RWPE1 (cell line): ENCODE measurements at regions of chr11 and their contacts with region 1.

Region 1: GRCh38 chr11:62905927-62906531 is 15.1 kb downstream of the CHRM1 start:
- DNase-seq: peak; percentile 79
- H3K27ac ChIP-seq: no peak overlapping the region
- CTCF ChIP-seq: peak; percentile 98

Region 2: GRCh38 chr11:62922658-62923431 is 16.8 kb after region 1 on chr11:
- CTCF ChIA-PET with region 1: interaction called, 16 read pairs
- POLR2A ChIA-PET with region 1: no interaction called
- DNase-seq: no peak
- H3K27ac ChIP-seq: no peak overlapping the region; the same call in 1 of the 2 replicates
- CTCF ChIP-seq: no peak

Region 3: DNA sequence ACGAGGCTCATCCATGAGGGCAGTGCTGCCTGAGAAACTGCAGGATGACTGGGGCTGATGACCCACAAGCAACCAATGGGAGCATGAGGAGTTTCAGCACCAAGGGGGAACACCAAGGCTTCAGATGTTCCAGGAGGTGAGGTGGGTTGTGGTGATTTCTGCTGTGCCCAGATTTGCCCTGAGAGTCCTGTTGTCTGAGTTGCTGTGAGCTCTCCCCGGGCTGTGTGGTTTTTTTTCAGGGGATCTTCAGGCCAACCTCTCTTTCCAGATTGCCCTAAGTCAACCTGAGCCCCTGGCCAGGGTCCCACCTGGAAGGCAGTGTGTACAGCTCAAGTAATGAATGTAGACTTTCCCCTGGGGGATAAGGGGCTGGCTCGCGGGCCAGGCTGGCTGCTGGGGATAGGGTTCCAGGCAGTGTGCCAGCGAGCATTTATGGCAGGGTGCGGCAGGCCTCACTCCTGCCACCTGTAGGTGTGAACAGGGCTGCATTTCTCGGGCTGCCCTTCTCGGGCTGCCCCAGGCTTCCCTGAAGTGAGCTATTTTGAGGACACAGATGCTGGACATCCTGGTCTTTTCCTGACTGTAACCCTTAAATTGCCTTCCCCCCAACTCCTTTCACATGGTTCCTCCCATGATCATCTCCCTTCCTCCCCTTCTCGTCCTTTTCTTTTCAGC is 69.0 kb after region 1 on chr11:
- CTCF ChIA-PET with region 1: interaction called, 18 read pairs
- POLR2A ChIA-PET with region 1: no interaction called
- DNase-seq: no peak
- H3K27ac ChIP-seq: no peak overlapping the region
- CTCF ChIP-seq: peak; percentile 28; the same call in 1 of the 2 replicates

Region 4: DNA sequence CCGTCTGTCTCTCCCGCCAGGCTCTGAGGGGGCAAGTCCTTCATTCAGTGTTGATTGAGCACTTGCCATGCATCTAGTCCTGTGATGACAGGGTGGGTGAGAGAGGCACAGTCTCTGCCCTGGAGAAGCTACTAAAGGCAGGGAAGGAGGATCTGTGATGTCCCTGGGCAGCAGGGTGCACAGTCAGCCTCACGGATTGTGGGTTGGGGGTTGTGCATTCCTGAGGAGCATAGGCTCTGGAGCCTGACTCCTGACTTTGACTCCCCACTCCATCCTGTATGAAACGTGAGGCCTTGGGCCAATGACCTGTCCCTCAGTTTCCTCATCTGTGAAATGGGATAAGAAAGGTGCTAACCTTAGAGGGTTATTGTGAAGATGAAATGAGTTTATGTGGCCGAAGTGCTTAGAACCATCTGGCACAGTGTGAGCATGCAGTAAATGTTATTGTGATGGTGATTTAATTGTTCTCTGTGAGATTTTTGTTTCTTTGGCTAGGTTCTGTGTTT is 105.0 kb after region 1 on chr11:
- CTCF ChIA-PET with region 1: interaction called, 14 read pairs
- POLR2A ChIA-PET with region 1: no interaction called
- DNase-seq: no peak
- H3K27ac ChIP-seq: no peak overlapping the region
- CTCF ChIP-seq: no peak

Region 5: DNA sequence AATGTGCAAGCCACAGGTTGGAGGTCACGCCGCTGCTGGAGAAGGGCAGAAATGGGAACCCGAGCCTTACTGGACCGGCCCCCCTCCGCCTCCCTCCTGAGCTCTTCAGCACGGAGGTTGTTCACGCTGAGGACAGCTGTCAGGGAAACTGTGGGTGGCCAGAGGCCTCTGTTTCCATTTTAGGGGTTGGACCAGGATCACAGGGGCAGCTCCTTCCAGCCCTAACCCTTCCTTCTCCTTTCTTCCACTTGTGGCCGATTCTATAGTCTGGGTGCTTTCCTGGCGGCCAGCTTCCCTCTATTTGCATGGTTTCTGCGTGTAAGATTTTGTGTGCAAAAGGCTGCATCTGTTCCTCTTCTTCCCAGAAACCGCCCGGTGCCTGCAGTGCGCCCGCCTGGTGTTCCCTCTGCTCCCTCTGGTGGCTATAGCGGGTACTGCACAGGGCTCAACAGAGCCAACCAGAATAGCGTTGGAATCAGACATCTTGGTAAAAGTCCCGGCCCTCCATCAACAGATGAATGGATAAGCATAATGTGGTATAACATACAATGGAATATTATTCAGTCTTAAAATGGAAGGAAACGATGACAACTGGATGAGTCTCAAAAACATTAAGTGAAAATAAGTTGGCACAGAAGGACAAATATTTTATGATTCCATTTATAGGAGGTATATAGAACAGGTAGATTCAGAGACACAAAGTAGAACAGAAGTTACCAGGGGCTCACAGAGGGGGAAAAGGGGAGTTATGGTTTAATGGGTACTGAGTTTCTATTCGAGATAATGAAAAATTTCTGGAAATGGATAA is 118.0 kb after region 1 on chr11:
- CTCF ChIA-PET with region 1: interaction called, 129 read pairs
- POLR2A ChIA-PET with region 1: no interaction called
- DNase-seq: peak; percentile 77
- H3K27ac ChIP-seq: no peak overlapping the region
- CTCF ChIP-seq: peak; percentile 99

Region 6: DNA sequence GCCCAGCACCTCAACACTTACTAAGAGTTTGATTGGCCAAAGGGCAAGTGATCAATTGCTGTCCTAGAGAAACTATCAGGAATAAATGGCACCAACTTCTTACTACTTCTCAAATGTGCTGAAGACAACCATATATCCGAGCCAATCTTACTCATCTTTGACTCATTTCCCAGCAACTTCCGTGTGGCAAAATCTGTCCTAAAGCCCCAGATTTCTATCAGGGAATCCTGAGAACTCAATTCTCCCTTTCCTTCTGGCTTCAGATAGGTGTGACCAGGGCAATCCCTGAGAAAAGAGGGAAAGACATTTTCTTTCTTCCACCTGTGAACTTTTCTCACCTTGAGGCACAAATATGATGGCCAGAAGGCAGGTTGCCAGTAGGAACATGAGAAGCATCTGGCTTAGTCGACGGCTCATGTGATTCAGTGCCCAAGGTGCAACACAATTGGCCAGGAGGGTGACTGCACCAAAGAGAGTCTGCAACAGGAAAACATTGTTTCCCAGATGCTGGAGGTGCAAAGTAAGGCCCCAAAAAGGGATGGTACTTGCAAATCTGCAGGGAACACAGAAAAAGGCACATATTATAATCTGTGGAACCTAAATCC is 259.8 kb after region 1 on chr11:
- CTCF ChIA-PET with region 1: no interaction called
- POLR2A ChIA-PET with region 1: no interaction called
- DNase-seq: peak; percentile 1
- H3K27ac ChIP-seq: no peak overlapping the region
- CTCF ChIP-seq: no peak